ENCODE measurements at regions of chr16 and their contacts with region 1.

Region 1: GRCh38 chr16:67159593-67160406 is at the starts of genes FBXL8 and TRADD:
- DNase-seq: peak; percentile 63 to 68
- ATAC-seq: peak; percentile 33 to 46
- H3K4me3 ChIP-seq: peak within 1 kb of the TSS; percentile 75 to 87 (median 76)
- H3K27ac ChIP-seq: peak within 1 kb of the TSS; percentile 93 to 100 (median 95)
- H3K4me1 ChIP-seq: peaks cover 41 to 48% of the 10 kb centered on the region in 2 donors
- H3K27me3 ChIP-seq: no peaks in the 10 kb centered on the region
- CTCF ChIP-seq: peak in 4 of 5 experiments; percentile 23 to 51 (median 40)
- POLR2A ChIP-seq: peak; percentile 80 to 91
- total RNA-seq, gene FBXL8: 7.0 to 16.3 (median 14.3) TPM
- total RNA-seq, gene TRADD: 8.8 to 15.3 (median 10.1) TPM

Region 2: GRCh38 chr16:66947302-66948065 is 212.3 kb before region 1 on chr16:
- in situ Hi-C with region 1: no loop called
- intact Hi-C with region 1: loop called (anchors 2 kb)
- DNase-seq: peak; percentile 68 to 86
- ATAC-seq: peak; percentile 62 to 64
- H3K4me3 ChIP-seq: peak overlapping the region; percentile 74 to 90 (median 82)
- H3K27ac ChIP-seq: peak overlapping the region; percentile 97 to 99 (median 97)
- H3K4me1 ChIP-seq: peaks cover 21 to 35% of the 10 kb centered on the region in 2 donors
- H3K27me3 ChIP-seq: no peaks in the 10 kb centered on the region
- CTCF ChIP-seq: peak; percentile 83 to 96 (median 93)
- POLR2A ChIP-seq: peak; percentile 87 to 90

Region 3: GRCh38 chr16:66977341-66978113 is 182.3 kb before region 1 on chr16:
- in situ Hi-C with region 1: loop called in 3 of 4 experiments (anchors 5 to 10 kb)
- intact Hi-C with region 1: loop called (anchors 1 kb)
- DNase-seq: peak; percentile 81 to 88
- ATAC-seq: peak; percentile 81 to 92
- H3K4me3 ChIP-seq: no peak overlapping the region
- H3K27ac ChIP-seq: peak overlapping the region in 3 of 4 donors; percentile 23 to 47 (median 36)
- H3K4me1 ChIP-seq: peaks cover 0 to 10% of the 10 kb centered on the region in 2 donors
- H3K27me3 ChIP-seq: no peaks in the 10 kb centered on the region
- CTCF ChIP-seq: peak; percentile 96 to 99 (median 98)
- POLR2A ChIP-seq: no peak

Region 4: DNA sequence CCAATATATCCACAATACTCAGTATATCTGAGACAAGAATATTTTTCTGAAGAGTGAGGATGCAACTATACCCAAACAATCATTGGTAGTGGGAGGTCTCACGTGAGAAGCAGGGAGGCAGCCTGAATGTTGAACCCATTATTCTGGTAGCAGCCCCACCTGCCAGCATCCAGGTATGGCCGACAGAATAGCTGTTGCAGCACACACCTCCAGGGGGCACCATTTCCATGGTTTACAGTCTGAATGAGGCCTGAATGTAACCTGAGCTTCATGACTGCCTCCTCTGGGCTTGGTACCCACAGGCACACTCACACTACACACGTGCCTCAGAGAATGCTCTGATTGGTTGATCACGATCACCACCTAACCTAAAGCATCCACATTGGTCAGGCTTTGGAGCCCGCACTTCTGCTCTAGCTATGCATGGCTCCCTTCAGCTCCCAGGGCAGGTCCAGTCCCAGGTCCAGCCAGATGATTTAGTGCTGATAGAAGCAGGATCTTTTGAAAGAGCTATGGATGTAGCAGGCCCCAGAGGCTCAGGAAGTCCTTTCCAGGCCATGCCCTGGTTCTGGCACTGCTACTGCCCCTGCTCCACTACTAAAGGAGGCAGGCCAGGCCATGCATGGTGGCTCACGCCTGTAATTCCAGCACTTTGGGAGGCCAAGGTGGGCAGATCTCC is 141.9 kb before region 1 on chr16:
- in situ Hi-C with region 1: loop called in 1 of 4 experiments (anchors 10 kb)
- intact Hi-C with region 1: loop called (anchors 2 kb)
- DNase-seq: peak; percentile 52 to 82
- ATAC-seq: peak; percentile 79 to 92
- H3K4me3 ChIP-seq: no peak overlapping the region
- H3K27ac ChIP-seq: no peak overlapping the region
- H3K4me1 ChIP-seq: peaks cover 5 to 7% of the 10 kb centered on the region in 2 donors
- H3K27me3 ChIP-seq: no peaks in the 10 kb centered on the region
- CTCF ChIP-seq: peak; percentile 64 to 85 (median 75)
- POLR2A ChIP-seq: no peak

Region 5: GRCh38 chr16:67109407-67110135 is 50.2 kb before region 1 on chr16 and contains the start of gene PHAF1:
- in situ Hi-C with region 1: no loop called
- intact Hi-C with region 1: loop called (anchors 2 kb)
- DNase-seq: peak; percentile 88 to 93
- ATAC-seq: peak; percentile 84 to 91
- H3K4me3 ChIP-seq: peak within 1 kb of the TSS; percentile 85 to 97 (median 93)
- H3K27ac ChIP-seq: peak within 1 kb of the TSS; percentile 83 to 92 (median 89)
- H3K4me1 ChIP-seq: peaks cover 36 to 42% of the 10 kb centered on the region in 2 donors
- H3K27me3 ChIP-seq: no peaks in the 10 kb centered on the region
- CTCF ChIP-seq: no peak
- POLR2A ChIP-seq: peak; percentile 89 to 91
- total RNA-seq, gene PHAF1: 23.3 to 63.4 (median 48.9) TPM

Region 6: GRCh38 chr16:67246934-67247697 is 87.3 kb after region 1 on chr16 and contains the start of gene FHOD1:
- in situ Hi-C with region 1: no loop called
- intact Hi-C with region 1: loop called (anchors 5 kb)
- DNase-seq: peak; percentile 98 to 99
- ATAC-seq: peak; percentile 45 to 46
- H3K4me3 ChIP-seq: peak within 1 kb of the TSS; percentile 84 to 93 (median 90)
- H3K27ac ChIP-seq: peak within 1 kb of the TSS; percentile 94 to 99 (median 98)
- H3K4me1 ChIP-seq: peaks cover 56 to 59% of the 10 kb centered on the region in 2 donors
- H3K27me3 ChIP-seq: no peaks in the 10 kb centered on the region
- CTCF ChIP-seq: peak in 2 of 5 experiments; percentile 6 to 25
- POLR2A ChIP-seq: peak; percentile 86 to 93
- total RNA-seq, gene FHOD1: 26.3 to 65.3 (median 52.4) TPM

Region 7: DNA sequence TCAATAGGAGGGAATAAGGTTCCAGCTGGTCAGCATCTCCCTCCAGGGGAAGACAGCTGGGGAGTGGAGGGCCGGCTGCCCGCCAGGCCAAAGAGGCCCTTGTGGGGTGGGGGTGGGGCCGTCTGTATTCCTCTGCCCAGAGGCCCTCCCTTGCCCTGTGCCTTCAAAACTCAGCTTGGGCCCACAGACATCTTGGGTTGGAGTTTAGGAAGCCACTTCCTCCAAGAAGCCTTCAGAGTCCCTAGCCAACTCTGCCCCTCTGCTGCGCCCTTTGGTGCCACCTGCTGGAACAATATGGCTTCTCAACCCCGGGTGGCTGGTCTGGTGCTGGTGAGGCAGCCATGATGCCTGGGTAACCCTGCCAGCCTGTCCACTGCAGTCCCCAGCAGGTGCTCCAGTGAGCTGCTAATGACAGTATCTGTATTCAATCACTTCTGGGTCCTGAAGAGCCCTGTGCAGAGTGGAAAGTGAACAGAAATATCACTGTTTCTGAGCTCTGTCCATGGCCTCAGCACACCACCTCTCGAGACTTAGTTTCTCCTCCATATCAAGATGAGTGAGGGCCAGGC is 287.8 kb after region 1 on chr16:
- in situ Hi-C with region 1: no loop called
- intact Hi-C with region 1: no loop called
- DNase-seq: peak in 1 of 2 donors; percentile 44
- ATAC-seq: no peak
- H3K4me3 ChIP-seq: no peak overlapping the region
- H3K27ac ChIP-seq: no peak overlapping the region
- H3K4me1 ChIP-seq: peaks cover 95 to 100% of the 10 kb centered on the region in 2 donors
- H3K27me3 ChIP-seq: no peaks in the 10 kb centered on the region
- CTCF ChIP-seq: peak in 3 of 5 experiments; percentile 36 to 54 (median 48)
- POLR2A ChIP-seq: no peak